Mammary epithelial cell (primary cell): ENCODE measurements at regions of chr5 and their contacts with region 1.

Region 1: GRCh38 chr5:171152382-171152781 is 156.7 kb upstream of the TLX3 start:
- DNase-seq: peak; percentile 19
- H3K4me3 ChIP-seq: no peak overlapping the region
- H3K27ac ChIP-seq: no peak overlapping the region
- H3K4me1 ChIP-seq: no peaks in the 10 kb centered on the region
- H3K27me3 ChIP-seq: no peaks in the 10 kb centered on the region
- CTCF ChIP-seq: peak; percentile 14 to 47

Region 2: GRCh38 chr5:170809551-170809950 is 342.8 kb before region 1 on chr5:
- CTCF ChIA-PET with region 1: no interaction called
- dilution Hi-C with region 1: no loop called
- in situ Hi-C with region 1: no loop called
- intact Hi-C with region 1: loop called (anchors 1 kb)
- DNase-seq: peak; percentile 23
- H3K4me3 ChIP-seq: no peak overlapping the region
- H3K27ac ChIP-seq: no peak overlapping the region
- H3K4me1 ChIP-seq: no peaks in the 10 kb centered on the region
- H3K27me3 ChIP-seq: no peaks in the 10 kb centered on the region
- CTCF ChIP-seq: peak; percentile 3 to 54

Region 3: GRCh38 chr5:170986598-170986997 is 165.8 kb before region 1 on chr5:
- CTCF ChIA-PET with region 1: no interaction called
- dilution Hi-C with region 1: no loop called
- in situ Hi-C with region 1: no loop called
- intact Hi-C with region 1: loop called (anchors 1 kb)
- DNase-seq: peak; percentile 3
- H3K4me3 ChIP-seq: no peak overlapping the region
- H3K27ac ChIP-seq: no peak overlapping the region
- H3K4me1 ChIP-seq: no peaks in the 10 kb centered on the region
- H3K27me3 ChIP-seq: no peaks in the 10 kb centered on the region
- CTCF ChIP-seq: peak; percentile 16 to 37